OCI-LY7 (cell line): ENCODE measurements at regions of chr14 and their contacts with region 1.

Region 1: GRCh38 chr14:97441740-97442362 is 644.7 kb downstream of the VRK1 start:
- DNase-seq: no peak
- H3K4me3 ChIP-seq: no peak overlapping the region
- H3K27ac ChIP-seq: no peak overlapping the region
- H3K4me1 ChIP-seq: no peaks in the 10 kb centered on the region
- CTCF ChIP-seq: no peak

Region 2: GRCh38 chr14:97458661-97459579 is 17.1 kb after region 1 on chr14:
- CTCF ChIA-PET with region 1: no interaction called
- POLR2A ChIA-PET with region 1: interaction called, 4 read pairs
- intact Hi-C with region 1: loop called (anchors 1 kb)
- DNase-seq: no peak
- H3K4me3 ChIP-seq: no peak overlapping the region
- H3K27ac ChIP-seq: no peak overlapping the region
- H3K4me1 ChIP-seq: no peaks in the 10 kb centered on the region
- CTCF ChIP-seq: no peak

Region 3: GRCh38 chr14:97499792-97500495 is 58.1 kb after region 1 on chr14:
- CTCF ChIA-PET with region 1: no interaction called
- POLR2A ChIA-PET with region 1: no interaction called
- intact Hi-C with region 1: no loop called
- DNase-seq: no peak
- H3K4me3 ChIP-seq: no peak overlapping the region
- H3K27ac ChIP-seq: no peak overlapping the region
- H3K4me1 ChIP-seq: no peaks in the 10 kb centered on the region
- CTCF ChIP-seq: no peak